AG04449 (cell line): ENCODE measurements at regions of chr17 and their contacts with region 1.

Region 1: GRCh38 chr17:29369831-29370735 is 20.1 kb upstream of the TAOK1 start:
- DNase-seq: peak; percentile 38
- H3K4me3 ChIP-seq: peak overlapping the region; percentile 40
- CTCF ChIP-seq: peak; percentile 79

Region 2: DNA sequence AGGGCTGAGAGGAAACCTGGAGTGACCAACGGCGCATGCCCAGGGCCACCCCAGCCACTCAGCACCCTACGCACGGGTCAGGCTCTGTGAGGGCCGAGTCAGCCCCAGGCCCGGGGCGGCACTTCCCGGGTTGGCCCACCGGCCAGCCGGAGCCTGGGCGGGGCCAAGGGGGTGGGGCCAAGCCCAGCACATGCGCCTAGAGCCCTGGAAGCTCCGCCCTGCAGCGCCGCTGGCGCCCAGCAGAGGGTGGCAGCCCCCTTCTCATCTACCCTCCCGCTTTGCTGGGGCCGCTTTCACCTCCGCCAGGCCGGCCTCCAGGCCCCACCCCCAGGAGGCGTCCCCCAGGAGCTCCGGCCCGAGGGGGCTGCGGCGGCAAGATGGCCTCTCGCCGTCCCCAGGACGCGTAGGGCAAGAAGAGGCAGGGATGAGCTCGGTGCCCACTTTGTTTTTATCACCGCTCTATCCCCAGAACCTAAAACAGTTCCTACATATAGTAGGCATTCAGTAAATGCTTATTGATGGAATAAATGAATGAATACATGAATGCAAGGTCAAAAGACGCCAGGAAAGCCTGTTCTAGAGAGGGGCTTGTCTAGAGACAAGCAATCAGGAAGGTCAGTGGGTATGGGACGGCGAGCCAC is 221.2 kb before region 1 on chr17:
- CTCF ChIA-PET with region 1: interaction called, 12 read pairs
- POLR2A ChIA-PET with region 1: no interaction called
- DNase-seq: no peak
- H3K4me3 ChIP-seq: peak overlapping the region; percentile 54
- CTCF ChIP-seq: peak; percentile 96

Region 3: DNA sequence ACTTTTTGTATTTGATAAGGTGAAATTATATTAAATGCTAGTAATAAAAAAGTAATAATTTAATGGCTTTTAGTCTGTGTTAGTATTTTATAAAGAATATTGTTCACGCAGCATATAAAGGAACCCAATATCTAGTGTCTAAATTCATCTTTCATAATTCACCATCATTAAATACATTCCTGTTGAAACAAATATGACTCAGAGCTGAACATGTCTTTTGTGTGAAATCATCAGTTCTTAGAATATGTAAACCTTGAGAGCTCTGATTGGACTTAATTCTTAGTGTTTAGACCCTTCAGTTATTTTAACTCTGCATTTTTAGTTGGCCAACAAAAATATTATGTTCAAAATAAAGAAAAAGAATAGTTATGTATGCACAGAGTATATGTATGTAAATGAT is 124.9 kb after region 1 on chr17:
- CTCF ChIA-PET with region 1: interaction called, 32 read pairs
- POLR2A ChIA-PET with region 1: no interaction called
- DNase-seq: peak; percentile 17
- H3K4me3 ChIP-seq: no peak overlapping the region
- CTCF ChIP-seq: no peak

Region 4: GRCh38 chr17:29524460-29525091 is 154.5 kb after region 1 on chr17:
- CTCF ChIA-PET with region 1: interaction called, 14 read pairs
- POLR2A ChIA-PET with region 1: no interaction called
- DNase-seq: no peak
- H3K4me3 ChIP-seq: no peak overlapping the region
- CTCF ChIP-seq: no peak

Region 5: GRCh38 chr17:29561554-29562517 is 191.8 kb after region 1 on chr17:
- CTCF ChIA-PET with region 1: interaction called, 222 read pairs
- POLR2A ChIA-PET with region 1: no interaction called
- DNase-seq: no peak
- H3K4me3 ChIP-seq: no peak overlapping the region
- CTCF ChIP-seq: no peak

Region 6: GRCh38 chr17:29589524-29590410 is 219.7 kb after region 1 on chr17 and contains the start of gene GIT1:
- CTCF ChIA-PET with region 1: interaction called, 35 read pairs
- POLR2A ChIA-PET with region 1: no interaction called
- DNase-seq: no peak
- H3K4me3 ChIP-seq: peak within 1 kb of the TSS; percentile 82
- CTCF ChIP-seq: no peak